Activated CD8-positive, alpha-beta T cell treated with anti-CD3 and anti-CD28 coated beads for 36 hours (primary cell): ENCODE measurements at regions of chr14 and their contacts with region 1.

Region 1: GRCh38 chr14:69547701-69548348 is 26.8 kb downstream of the CCDC177 start:
- DNase-seq: peak; percentile 44
- ATAC-seq: peak; percentile 55
- H3K4me3 Mint-ChIP-seq: no peak overlapping the region
- H3K27ac Mint-ChIP-seq: no peak overlapping the region
- H3K4me1 Mint-ChIP-seq: peaks cover 9% of the 10 kb centered on the region
- H3K27me3 Mint-ChIP-seq: peaks cover 40% of the 10 kb centered on the region
- CTCF ChIP-seq: peak; percentile 94

Region 2: GRCh38 chr14:69559581-69560011 is 11.8 kb after region 1 on chr14:
- CTCF ChIA-PET with region 1: interaction called, 21 read pairs
- POLR2A ChIA-PET with region 1: no interaction called
- intact Hi-C with region 1: no loop called
- DNase-seq: no peak
- ATAC-seq: no peak
- H3K4me3 Mint-ChIP-seq: no peak overlapping the region
- H3K27ac Mint-ChIP-seq: no peak overlapping the region
- H3K4me1 Mint-ChIP-seq: no peaks in the 10 kb centered on the region
- H3K27me3 Mint-ChIP-seq: peaks cover 10% of the 10 kb centered on the region
- CTCF ChIP-seq: no peak

Region 3: GRCh38 chr14:69574263-69574953 is 26.6 kb after region 1 on chr14 and contains the start of gene CCDC177:
- CTCF ChIA-PET with region 1: interaction called, 52 read pairs
- POLR2A ChIA-PET with region 1: interaction called, 3 read pairs
- intact Hi-C with region 1: no loop called
- DNase-seq: peak; percentile 81
- ATAC-seq: peak; percentile 82
- H3K4me3 Mint-ChIP-seq: peak within 1 kb of the TSS; percentile 68
- H3K27ac Mint-ChIP-seq: no peak within 1 kb of the TSS
- H3K4me1 Mint-ChIP-seq: peaks cover 5% of the 10 kb centered on the region
- H3K27me3 Mint-ChIP-seq: peaks cover 49% of the 10 kb centered on the region
- CTCF ChIP-seq: peak; percentile 97
- total RNA-seq, gene CCDC177: not detected

Region 4: GRCh38 chr14:69580009-69580577 is 32.3 kb after region 1 on chr14:
- CTCF ChIA-PET with region 1: interaction called, 52 read pairs
- POLR2A ChIA-PET with region 1: no interaction called
- intact Hi-C with region 1: no loop called
- DNase-seq: peak; percentile 29
- ATAC-seq: peak; percentile 39
- H3K4me3 Mint-ChIP-seq: no peak overlapping the region
- H3K27ac Mint-ChIP-seq: no peak overlapping the region
- H3K4me1 Mint-ChIP-seq: no peaks in the 10 kb centered on the region
- H3K27me3 Mint-ChIP-seq: peaks cover 15% of the 10 kb centered on the region
- CTCF ChIP-seq: peak; percentile 31